H1 (cell line): ENCODE measurements at regions of chr5 and their contacts with region 1.

Region 1: GRCh38 chr5:151651997-151652645 is 34.6 kb downstream of the SPARC start:
- DNase-seq: peak; percentile 60 to 87
- H3K4me3 ChIP-seq: no peak overlapping the region
- H3K27ac ChIP-seq: no peak overlapping the region
- H3K4me1 ChIP-seq: no peaks in the 10 kb centered on the region; a peak in 1 of 7 replicates
- H3K27me3 ChIP-seq: no peaks in the 10 kb centered on the region
- CTCF ChIP-seq: peak; percentile 93 to 98 (median 97)
- EP300 ChIP-seq: no peak
- POLR2A ChIP-seq: no peak
- RAD21 ChIP-seq: peak; percentile 99 to 100

Region 2: GRCh38 chr5:151447174-151448037 is 204.7 kb before region 1 on chr5 and contains the start of gene SLC36A1:
- CTCF ChIA-PET with region 1: interaction called, 17 read pairs
- POLR2A ChIA-PET with region 1: no interaction called
- DNase-seq: peak; percentile 93 to 98
- H3K4me3 ChIP-seq: peak within 1 kb of the TSS; percentile 45 to 81 (median 72)
- H3K27ac ChIP-seq: no peak within 1 kb of the TSS
- H3K4me1 ChIP-seq: peaks cover 0 to 10% (median 4%) of the 10 kb centered on the region in 4 experiments; a peak in 4 of 7 replicates
- H3K27me3 ChIP-seq: no peaks in the 10 kb centered on the region
- CTCF ChIP-seq: peak; percentile 76 to 80 (median 78)
- EP300 ChIP-seq: no peak; a peak in 1 of 3 replicates
- POLR2A ChIP-seq: peak in 1 of 2 experiments; percentile 67; a peak in 2 of 3 replicates
- RAD21 ChIP-seq: peak; percentile 64 to 76
- total RNA-seq, gene SLC36A1: 6.6 and 9.1 TPM in 2 replicates

Region 3: GRCh38 chr5:151499501-151500035 is 152.6 kb before region 1 on chr5:
- CTCF ChIA-PET with region 1: interaction called, 21 read pairs
- POLR2A ChIA-PET with region 1: interaction called, 3 read pairs
- DNase-seq: no peak
- H3K4me3 ChIP-seq: no peak overlapping the region
- H3K27ac ChIP-seq: no peak overlapping the region
- H3K4me1 ChIP-seq: peaks cover 0 to 4% (median under 1%) of the 10 kb centered on the region in 4 experiments; a peak in 3 of 7 replicates
- H3K27me3 ChIP-seq: no peaks in the 10 kb centered on the region
- CTCF ChIP-seq: no peak
- EP300 ChIP-seq: no peak
- POLR2A ChIP-seq: no peak
- RAD21 ChIP-seq: no peak

Region 4: GRCh38 chr5:151534350-151534749 is 117.8 kb before region 1 on chr5:
- CTCF ChIA-PET with region 1: interaction called, 29 read pairs
- POLR2A ChIA-PET with region 1: no interaction called
- DNase-seq: peak in 1 of 2 experiments; percentile 56
- H3K4me3 ChIP-seq: no peak overlapping the region
- H3K27ac ChIP-seq: no peak overlapping the region
- H3K4me1 ChIP-seq: peaks cover 0 to 6% (median 2%) of the 10 kb centered on the region in 4 experiments; a peak in 4 of 7 replicates
- H3K27me3 ChIP-seq: no peaks in the 10 kb centered on the region
- CTCF ChIP-seq: no peak
- EP300 ChIP-seq: no peak
- POLR2A ChIP-seq: no peak
- RAD21 ChIP-seq: no peak

Region 5: GRCh38 chr5:151569132-151570046 is 82.7 kb before region 1 on chr5:
- CTCF ChIA-PET with region 1: interaction called, 30 read pairs
- POLR2A ChIA-PET with region 1: no interaction called
- DNase-seq: no peak
- H3K4me3 ChIP-seq: no peak overlapping the region
- H3K27ac ChIP-seq: no peak overlapping the region
- H3K4me1 ChIP-seq: peaks cover 0 to 15% (median 7%) of the 10 kb centered on the region in 4 experiments; a peak in 4 of 7 replicates
- H3K27me3 ChIP-seq: peaks cover 0 to 16% (median 4%) of the 10 kb centered on the region in 4 experiments; a peak in 3 of 7 replicates
- CTCF ChIP-seq: no peak
- EP300 ChIP-seq: no peak
- POLR2A ChIP-seq: no peak
- RAD21 ChIP-seq: no peak

Region 6: DNA sequence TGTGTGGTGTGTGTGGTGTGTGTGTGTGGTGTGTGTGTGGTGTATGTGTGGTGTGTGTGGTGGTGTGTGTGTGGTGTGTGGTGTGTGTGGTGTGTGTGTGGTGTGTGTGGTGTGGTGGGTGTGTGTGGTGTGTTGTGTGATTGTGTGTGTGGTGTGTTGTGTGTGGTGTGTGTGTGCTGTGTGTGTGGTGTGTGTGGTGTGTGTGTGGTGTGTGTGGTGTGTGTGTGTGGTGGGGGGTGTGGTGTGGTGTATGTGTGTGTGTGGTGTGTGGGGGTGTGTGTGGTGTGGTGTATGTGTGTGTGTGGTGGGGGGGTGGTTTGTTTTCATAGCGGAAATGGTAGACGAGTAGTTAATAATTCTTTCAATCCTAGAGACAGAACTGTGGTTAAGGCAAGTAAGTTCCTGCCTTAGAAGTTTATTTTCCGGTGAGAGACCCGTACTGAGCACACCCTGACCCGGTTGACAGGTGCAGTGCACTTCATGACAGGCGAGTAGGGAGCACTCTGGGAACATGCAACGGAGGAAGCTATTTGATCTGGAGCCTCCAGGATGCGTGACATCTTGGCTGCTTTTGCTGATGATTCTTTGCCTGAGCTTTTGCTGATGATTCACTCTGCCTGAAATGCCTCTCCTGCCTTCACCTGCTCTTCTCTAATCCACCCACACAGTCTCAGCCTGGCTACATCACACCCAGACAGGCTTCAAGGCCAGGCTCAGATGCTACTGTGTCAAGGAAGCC is 39.3 kb before region 1 on chr5:
- CTCF ChIA-PET with region 1: interaction called, 28 read pairs
- POLR2A ChIA-PET with region 1: no interaction called
- DNase-seq: no peak
- H3K4me3 ChIP-seq: no peak overlapping the region
- H3K27ac ChIP-seq: no peak overlapping the region; the same call in 1 of the 2 replicates
- H3K4me1 ChIP-seq: 0 out of 7 replicates have a peak, but pooled peaks cover 0 to 3% (median 0%) of the 10 kb centered on the region in 4 experiments
- H3K27me3 ChIP-seq: no peaks in the 10 kb centered on the region
- CTCF ChIP-seq: no peak
- EP300 ChIP-seq: no peak
- POLR2A ChIP-seq: no peak
- RAD21 ChIP-seq: no peak

Region 7: DNA sequence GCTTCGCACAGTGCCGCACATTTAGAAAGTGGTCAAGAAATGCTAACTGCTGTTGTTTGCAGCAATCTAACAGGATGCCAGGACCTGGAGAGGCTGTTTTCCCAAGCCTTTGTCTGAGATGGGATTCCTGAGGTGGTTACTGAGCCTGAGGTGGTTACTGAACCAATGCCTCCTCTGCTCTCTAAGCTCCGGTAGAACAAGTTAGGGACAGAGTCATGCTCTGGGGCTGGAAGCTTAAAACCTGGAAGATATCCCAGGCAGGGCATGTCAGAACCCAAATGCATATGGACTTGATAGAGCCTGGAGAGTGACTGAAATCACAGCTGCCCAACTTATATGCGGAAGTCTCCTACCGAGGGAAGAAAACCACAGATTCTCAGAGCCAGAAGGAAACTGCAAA is 14.4 kb before region 1 on chr5:
- CTCF ChIA-PET with region 1: interaction called, 15 read pairs
- POLR2A ChIA-PET with region 1: no interaction called
- DNase-seq: no peak
- H3K4me3 ChIP-seq: no peak overlapping the region
- H3K27ac ChIP-seq: no peak overlapping the region
- H3K4me1 ChIP-seq: peaks cover 0 to 5% (median 2%) of the 10 kb centered on the region in 4 experiments; a peak in 2 of 7 replicates
- H3K27me3 ChIP-seq: no peaks in the 10 kb centered on the region; a peak in 2 of 7 replicates
- CTCF ChIP-seq: no peak
- EP300 ChIP-seq: no peak
- POLR2A ChIP-seq: no peak
- RAD21 ChIP-seq: no peak